Caco-2 (cell line): ENCODE measurements at regions of chr12 and their contacts with region 1.

Region 1: GRCh38 chr12:80195074-80195726 is 95.9 kb downstream of the OTOGL start:
- DNase-seq: peak; percentile 45 to 49
- H3K4me3 ChIP-seq: no peak overlapping the region
- H3K4me3 Mint-ChIP-seq: no peak overlapping the region
- H3K27ac Mint-ChIP-seq: no peak overlapping the region
- H3K4me1 ChIP-seq: no peaks in the 10 kb centered on the region
- H3K4me1 Mint-ChIP-seq: no peaks in the 10 kb centered on the region
- H3K27me3 ChIP-seq: no peaks in the 10 kb centered on the region
- H3K27me3 Mint-ChIP-seq: peaks cover 3% of the 10 kb centered on the region
- CTCF ChIP-seq: peak; percentile 65 to 77

Region 2: DNA sequence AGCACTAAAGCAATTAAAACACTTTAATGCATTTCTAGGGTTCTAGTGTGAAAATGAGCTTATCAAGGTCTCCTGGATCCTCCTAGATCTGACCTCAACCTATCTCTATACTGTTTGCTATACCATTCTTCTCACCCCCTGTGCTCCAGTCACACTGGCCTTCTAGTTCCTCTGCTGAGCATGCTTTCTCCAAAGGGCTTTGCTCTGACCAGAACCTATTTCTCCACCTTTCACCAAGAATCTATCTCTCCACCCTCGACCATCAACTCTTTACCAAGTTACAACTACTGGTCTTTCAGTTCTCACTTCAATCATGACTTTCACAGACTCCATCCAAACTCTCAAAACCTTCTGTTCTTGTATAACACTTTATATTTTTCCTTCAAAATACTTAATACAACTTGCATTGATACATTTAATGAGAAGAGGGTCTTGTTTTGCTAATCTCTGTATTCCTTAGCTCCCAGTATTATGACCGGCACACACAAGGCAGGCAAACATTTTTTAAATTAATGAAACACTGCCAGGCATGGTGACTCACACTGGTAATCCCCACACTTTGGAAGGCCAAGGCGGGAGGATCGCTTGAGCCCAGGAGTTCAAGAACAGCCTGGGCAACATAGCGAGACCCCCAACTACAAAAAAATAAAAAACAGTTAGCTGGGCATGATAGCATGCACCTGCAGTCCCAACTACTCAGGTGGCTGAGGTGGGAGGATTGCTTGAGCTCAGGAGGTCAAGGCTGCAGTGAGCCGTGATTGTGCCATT is 283.1 kb before region 1 on chr12:
- CTCF ChIA-PET with region 1: no interaction called
- POLR2A ChIA-PET with region 1: no interaction called
- intact Hi-C with region 1: no loop called
- DNase-seq: no peak
- H3K4me3 ChIP-seq: no peak overlapping the region
- H3K4me3 Mint-ChIP-seq: no peak overlapping the region
- H3K27ac Mint-ChIP-seq: no peak overlapping the region
- H3K4me1 ChIP-seq: peaks cover 5% of the 10 kb centered on the region; the same call in 1 of the 2 replicates
- H3K4me1 Mint-ChIP-seq: peaks cover 7% of the 10 kb centered on the region
- H3K27me3 ChIP-seq: no peaks in the 10 kb centered on the region
- H3K27me3 Mint-ChIP-seq: no peaks in the 10 kb centered on the region
- CTCF ChIP-seq: no peak

Region 3: DNA sequence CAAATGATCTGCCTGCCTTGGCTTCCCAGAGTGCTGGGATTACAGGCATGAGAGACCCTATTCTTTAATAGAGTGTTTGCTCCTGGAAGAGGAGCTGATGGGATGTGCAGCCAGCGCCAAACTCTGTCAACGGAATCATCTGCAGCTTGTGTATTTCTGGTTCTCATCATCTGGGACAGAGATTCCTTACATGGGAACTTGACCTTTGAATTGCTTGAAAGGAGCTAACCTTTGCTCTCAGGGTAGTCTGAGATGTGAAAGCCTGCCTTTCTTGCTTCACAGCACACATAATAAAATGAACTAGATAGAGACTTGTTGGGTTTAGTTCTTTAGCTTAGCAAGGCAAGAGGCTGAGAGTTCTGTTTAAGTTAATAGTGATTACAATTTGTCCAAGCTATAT is 24.1 kb after region 1 on chr12:
- CTCF ChIA-PET with region 1: interaction called, 19 read pairs
- POLR2A ChIA-PET with region 1: no interaction called
- intact Hi-C with region 1: loop called (anchors 1 kb)
- DNase-seq: peak; percentile 40 to 63
- H3K4me3 ChIP-seq: no peak overlapping the region
- H3K4me3 Mint-ChIP-seq: peak overlapping the region; percentile 53
- H3K27ac Mint-ChIP-seq: no peak overlapping the region
- H3K4me1 ChIP-seq: peaks cover 32% of the 10 kb centered on the region
- H3K4me1 Mint-ChIP-seq: peaks cover 16% of the 10 kb centered on the region
- H3K27me3 ChIP-seq: no peaks in the 10 kb centered on the region
- H3K27me3 Mint-ChIP-seq: no peaks in the 10 kb centered on the region
- CTCF ChIP-seq: no peak

Region 4: GRCh38 chr12:80269803-80270552 is 74.8 kb after region 1 on chr12:
- CTCF ChIA-PET with region 1: interaction called, 62 read pairs
- POLR2A ChIA-PET with region 1: interaction called, 3 read pairs
- intact Hi-C with region 1: loop called (anchors 1 kb)
- DNase-seq: peak in 1 of 2 experiments; percentile 51
- H3K4me3 ChIP-seq: no peak overlapping the region
- H3K4me3 Mint-ChIP-seq: no peak overlapping the region
- H3K27ac Mint-ChIP-seq: no peak overlapping the region
- H3K4me1 ChIP-seq: no peaks in the 10 kb centered on the region
- H3K4me1 Mint-ChIP-seq: peaks cover 7% of the 10 kb centered on the region
- H3K27me3 ChIP-seq: no peaks in the 10 kb centered on the region
- H3K27me3 Mint-ChIP-seq: peaks cover 3% of the 10 kb centered on the region
- CTCF ChIP-seq: peak; percentile 55 to 63

Region 5: DNA sequence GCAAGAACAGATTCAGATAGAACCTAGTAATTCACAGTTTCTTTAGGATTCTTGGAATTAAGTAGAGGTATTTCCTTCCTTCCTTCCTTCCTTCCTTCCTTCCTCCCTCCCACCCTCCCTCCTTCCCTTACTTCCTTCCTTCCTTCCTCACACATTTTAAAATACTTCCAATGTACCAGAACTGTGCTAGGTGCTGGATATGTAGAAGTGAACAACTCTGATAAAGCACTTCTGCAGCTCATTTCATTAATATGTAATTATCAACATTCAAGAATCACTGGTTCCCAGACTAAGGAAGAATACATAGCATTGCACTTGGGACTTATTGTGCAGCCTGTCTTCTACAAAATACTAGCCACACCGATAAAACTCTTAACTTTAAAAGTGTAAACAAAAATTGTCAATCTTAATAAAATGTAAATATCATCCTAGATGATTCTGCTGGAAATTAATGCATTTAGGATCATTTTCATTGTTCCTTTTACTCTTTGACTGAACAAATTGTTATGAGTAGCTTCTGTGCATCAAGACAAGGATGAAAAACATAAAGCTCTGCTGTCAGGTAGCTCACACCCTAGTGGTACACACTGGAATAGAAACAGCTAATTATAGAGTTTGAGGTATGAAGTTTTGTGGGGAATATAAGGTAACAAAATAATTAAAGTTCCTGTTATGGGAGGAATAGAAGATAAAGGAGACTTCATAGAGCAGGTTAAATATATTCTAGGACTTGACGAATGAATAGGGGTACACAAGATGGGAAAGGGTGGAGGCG is 412.3 kb after region 1 on chr12:
- CTCF ChIA-PET with region 1: no interaction called
- POLR2A ChIA-PET with region 1: no interaction called
- intact Hi-C with region 1: loop called (anchors 10 kb)
- DNase-seq: no peak
- H3K4me3 ChIP-seq: no peak overlapping the region
- H3K4me3 Mint-ChIP-seq: no peak overlapping the region
- H3K27ac Mint-ChIP-seq: no peak overlapping the region
- H3K4me1 ChIP-seq: no peaks in the 10 kb centered on the region
- H3K4me1 Mint-ChIP-seq: no peaks in the 10 kb centered on the region
- H3K27me3 ChIP-seq: no peaks in the 10 kb centered on the region
- H3K27me3 Mint-ChIP-seq: peaks cover 5% of the 10 kb centered on the region
- CTCF ChIP-seq: peak; percentile 15 to 38

Region 6: DNA sequence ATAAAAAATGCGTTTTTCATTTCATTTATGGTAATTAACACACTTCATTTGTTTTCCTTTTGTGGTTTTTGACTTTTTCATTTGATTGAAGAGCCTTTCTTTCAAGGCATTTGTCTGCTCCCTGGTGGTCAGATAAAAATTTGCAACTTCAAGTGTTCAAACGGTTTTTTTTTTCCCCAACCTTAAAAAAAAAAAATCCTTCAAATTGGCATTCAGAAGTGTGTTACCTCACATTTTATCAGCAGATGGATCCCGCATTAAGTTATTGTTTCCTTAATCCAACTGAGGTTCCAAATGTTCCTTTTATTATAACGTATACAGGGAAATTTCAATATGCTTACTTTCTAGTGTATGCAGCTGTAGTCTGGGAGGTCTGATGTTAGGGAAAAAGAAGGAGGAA is 568.7 kb after region 1 on chr12:
- CTCF ChIA-PET with region 1: no interaction called
- POLR2A ChIA-PET with region 1: no interaction called
- intact Hi-C with region 1: loop called (anchors 5 kb)
- DNase-seq: peak in 1 of 2 experiments; percentile 37
- H3K4me3 ChIP-seq: no peak overlapping the region
- H3K4me3 Mint-ChIP-seq: no peak overlapping the region
- H3K27ac Mint-ChIP-seq: no peak overlapping the region
- H3K4me1 ChIP-seq: no peaks in the 10 kb centered on the region
- H3K4me1 Mint-ChIP-seq: no peaks in the 10 kb centered on the region
- H3K27me3 ChIP-seq: no peaks in the 10 kb centered on the region
- H3K27me3 Mint-ChIP-seq: peaks cover 9% of the 10 kb centered on the region
- CTCF ChIP-seq: peak; percentile 62 to 64